ENCODE measurements at regions of chr11 and their contacts with region 1.

Region 1: DNA sequence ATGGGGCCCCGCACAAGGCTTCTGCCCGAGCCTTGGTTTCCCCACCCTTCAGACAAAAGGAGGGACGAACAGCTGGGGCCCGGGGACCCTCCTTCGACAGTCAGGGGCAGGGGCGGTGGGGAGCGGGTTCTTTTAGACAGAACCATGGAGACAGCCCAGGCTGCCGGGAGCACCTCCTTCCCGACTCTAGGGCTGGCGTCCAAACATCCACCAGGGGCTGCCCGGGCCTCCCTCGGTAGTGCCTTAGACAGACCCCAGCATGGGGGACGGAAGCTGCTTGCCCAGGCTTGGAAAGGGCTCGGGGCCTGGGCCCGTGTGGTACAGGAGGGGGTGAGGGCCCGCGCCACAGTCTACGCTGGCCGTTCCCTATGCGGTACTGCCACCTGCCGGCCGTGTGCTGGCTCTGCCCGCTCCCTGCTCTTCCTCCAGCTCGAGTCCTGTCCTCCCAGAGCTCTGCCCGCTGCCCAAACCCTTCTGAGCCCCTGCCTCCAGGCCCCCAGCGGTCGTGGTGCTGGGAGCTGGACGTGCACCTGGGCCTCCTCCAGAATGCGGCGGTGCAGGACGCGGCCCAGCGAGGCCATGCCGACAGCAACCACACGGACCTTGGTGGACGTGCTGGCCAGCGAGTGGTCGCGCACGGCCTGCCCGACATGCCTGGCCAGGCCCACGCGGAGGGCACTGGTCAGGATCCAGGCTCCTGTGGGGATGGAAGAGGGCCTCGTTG is 20.1 kb downstream of the TSSC4 start:
- DNase-seq: peak; percentile 69 to 91
- ATAC-seq: peak; percentile 90 to 97
- H3K4me3 ChIP-seq: no peak overlapping the region
- H3K27ac ChIP-seq: peak overlapping the region in 1 of 2 experiments; percentile 62; a peak in 3 of 6 replicates
- H3K4me1 ChIP-seq: no peaks in the 10 kb centered on the region
- CTCF ChIP-seq: peak; percentile 84
- EP300 ChIP-seq: no peak
- POLR2A ChIP-seq: no peak
- RAD21 ChIP-seq: peak; percentile 92

Region 2: GRCh38 chr11:2166091-2166851 is 254.4 kb before region 1 on chr11:
- CTCF ChIA-PET with region 1: interaction called, 22 read pairs
- POLR2A ChIA-PET with region 1: no interaction called
- DNase-seq: peak in 1 of 2 experiments; percentile 42
- ATAC-seq: peak; percentile 25 to 80; a peak in 3 of 6 replicates
- H3K4me3 ChIP-seq: no peak overlapping the region
- H3K27ac ChIP-seq: no peak overlapping the region
- H3K4me1 ChIP-seq: no peaks in the 10 kb centered on the region
- CTCF ChIP-seq: peak; percentile 65
- EP300 ChIP-seq: no peak
- POLR2A ChIP-seq: no peak
- RAD21 ChIP-seq: peak; percentile 43 to 51

Region 3: GRCh38 chr11:2202055-2202899 is 218.4 kb before region 1 on chr11:
- CTCF ChIA-PET with region 1: interaction called, 98 read pairs
- POLR2A ChIA-PET with region 1: no interaction called
- DNase-seq: no peak
- ATAC-seq: no peak
- H3K4me3 ChIP-seq: no peak overlapping the region
- H3K27ac ChIP-seq: no peak overlapping the region
- H3K4me1 ChIP-seq: no peaks in the 10 kb centered on the region
- CTCF ChIP-seq: no peak
- EP300 ChIP-seq: no peak
- POLR2A ChIP-seq: no peak
- RAD21 ChIP-seq: no peak

Region 4: GRCh38 chr11:2348986-2349385 is 71.7 kb before region 1 on chr11:
- CTCF ChIA-PET with region 1: interaction called, 10 read pairs
- POLR2A ChIA-PET with region 1: no interaction called
- DNase-seq: no peak
- ATAC-seq: no peak
- H3K4me3 ChIP-seq: no peak overlapping the region
- H3K27ac ChIP-seq: no peak overlapping the region
- H3K4me1 ChIP-seq: no peaks in the 10 kb centered on the region
- CTCF ChIP-seq: no peak
- EP300 ChIP-seq: no peak
- POLR2A ChIP-seq: no peak
- RAD21 ChIP-seq: no peak

Region 5: GRCh38 chr11:2390725-2391151 is 29.9 kb before region 1 on chr11:
- CTCF ChIA-PET with region 1: interaction called, 25 read pairs
- POLR2A ChIA-PET with region 1: no interaction called
- DNase-seq: peak; percentile 31 to 44
- ATAC-seq: peak; percentile 17 to 60; a peak in 4 of 6 replicates
- H3K4me3 ChIP-seq: no peak overlapping the region
- H3K27ac ChIP-seq: peak overlapping the region; percentile 42 to 70; a peak in 4 of 6 replicates
- H3K4me1 ChIP-seq: peaks cover 24% of the 10 kb centered on the region
- CTCF ChIP-seq: no peak
- EP300 ChIP-seq: no peak
- POLR2A ChIP-seq: no peak
- RAD21 ChIP-seq: no peak

Region 6: GRCh38 chr11:2444821-2445745 is 24.4 kb after region 1 on chr11 and contains the start of gene KCNQ1:
- CTCF ChIA-PET with region 1: interaction called, 10 read pairs
- POLR2A ChIA-PET with region 1: no interaction called
- DNase-seq: peak; percentile 28 to 59
- ATAC-seq: peak; percentile 45 to 68
- H3K4me3 ChIP-seq: peak within 1 kb of the TSS; percentile 72
- H3K27ac ChIP-seq: peak within 1 kb of the TSS; percentile 53 to 80; a peak in 5 of 6 replicates
- H3K4me1 ChIP-seq: peaks cover 6% of the 10 kb centered on the region
- CTCF ChIP-seq: no peak
- EP300 ChIP-seq: no peak
- POLR2A ChIP-seq: no peak
- RAD21 ChIP-seq: no peak
- polyA plus RNA-seq, gene KCNQ1: 0.17 and 0.26 TPM in 2 replicates

Measured in A549 (cell line).